ENCODE measurements at regions of chr16 and their contacts with region 1.

Region 1: DNA sequence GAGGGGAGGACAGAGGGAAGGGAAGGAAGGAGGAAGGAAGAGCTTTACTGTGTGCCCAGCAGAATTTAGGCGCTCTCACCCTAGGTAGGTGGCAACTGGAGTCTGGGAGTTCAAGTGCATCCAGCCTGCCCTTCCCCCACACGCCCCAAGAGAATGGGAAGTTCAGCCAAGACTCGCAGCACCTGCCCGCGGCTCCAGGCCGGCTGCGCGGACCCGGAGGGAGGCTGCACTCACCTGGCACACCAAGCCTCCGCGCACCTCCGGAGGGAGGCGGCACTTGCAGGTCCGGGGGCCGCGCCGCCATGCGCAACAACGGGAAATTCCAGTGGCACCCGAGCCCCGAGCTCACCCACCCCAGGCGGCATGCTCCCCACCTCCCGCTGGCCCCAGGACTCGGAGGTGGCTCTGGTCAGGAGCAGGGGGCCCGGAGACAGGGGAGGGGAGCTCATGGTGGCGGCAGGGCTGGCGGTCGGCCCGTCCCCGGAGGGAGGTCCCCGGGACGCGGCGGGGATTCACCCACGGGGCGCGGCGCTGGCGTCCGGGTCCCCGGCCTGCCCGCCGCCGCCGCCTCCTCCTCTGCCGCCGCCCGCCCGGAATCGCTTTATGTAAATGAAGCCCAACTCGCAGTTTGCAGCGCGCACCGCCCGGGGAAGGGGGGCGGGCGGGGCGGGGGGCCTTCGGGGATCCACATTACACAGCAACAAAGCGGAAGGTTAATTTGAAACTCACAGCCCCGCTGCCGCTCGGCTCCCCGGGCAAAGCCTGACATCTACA is at the start of gene ZFHX3:
- DNase-seq: peak; percentile 82
- H3K4me3 ChIP-seq: peak within 1 kb of the TSS; percentile 68
- H3K27ac ChIP-seq: peak within 1 kb of the TSS; percentile 66 to 90
- H3K4me1 ChIP-seq: peaks cover 66 to 73% of the 10 kb centered on the region in 2 experiments
- H3K27me3 ChIP-seq: no peaks in the 10 kb centered on the region
- CTCF ChIP-seq: no peak
- EP300 ChIP-seq: no peak
- RAD21 ChIP-seq: peak; percentile 47
- polyA plus RNA-seq, gene ZFHX3: 1.9 and 2.0 TPM in 2 replicates

Region 2: GRCh38 chr16:73036074-73036826 is 11.5 kb before region 1 on chr16:
- CTCF ChIA-PET with region 1: interaction called, 10 read pairs
- POLR2A ChIA-PET with region 1: no interaction called
- DNase-seq: no peak
- H3K4me3 ChIP-seq: no peak overlapping the region
- H3K27ac ChIP-seq: no peak overlapping the region
- H3K4me1 ChIP-seq: peaks cover 37 to 49% of the 10 kb centered on the region in 2 experiments; a peak in 3 of 4 replicates
- H3K27me3 ChIP-seq: no peaks in the 10 kb centered on the region
- CTCF ChIP-seq: no peak
- EP300 ChIP-seq: no peak
- RAD21 ChIP-seq: no peak

Measured in SK-N-SH (cell line).